ENCODE measurements at regions of chr16 and their contacts with region 1.

Region 1: DNA sequence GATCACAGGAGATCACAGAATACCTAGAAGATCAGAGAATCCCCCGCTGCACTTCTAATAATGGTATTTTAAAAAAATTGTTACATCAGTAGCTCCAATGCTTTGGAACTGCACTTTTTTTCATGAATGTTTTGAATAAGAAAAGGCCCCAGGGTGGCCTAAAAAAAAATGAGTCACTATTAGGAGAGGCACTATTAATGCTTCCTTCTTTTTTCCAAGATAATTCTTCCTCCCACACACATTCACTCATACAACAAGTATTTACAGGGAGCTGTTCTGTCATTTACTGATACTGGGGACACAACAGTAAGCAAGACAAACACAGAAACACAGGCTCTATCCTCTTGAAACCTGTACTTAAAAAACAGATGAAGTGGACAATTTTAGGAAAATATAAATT is 675 bp upstream of the PDZD9 start:
- DNase-seq: no peak
- ATAC-seq: no peak

Region 2: GRCh38 chr16:21971856-21972255 is 29.7 kb before region 1 on chr16:
- intact Hi-C with region 1: no loop called
- DNase-seq: no peak
- ATAC-seq: no peak

Region 3: DNA sequence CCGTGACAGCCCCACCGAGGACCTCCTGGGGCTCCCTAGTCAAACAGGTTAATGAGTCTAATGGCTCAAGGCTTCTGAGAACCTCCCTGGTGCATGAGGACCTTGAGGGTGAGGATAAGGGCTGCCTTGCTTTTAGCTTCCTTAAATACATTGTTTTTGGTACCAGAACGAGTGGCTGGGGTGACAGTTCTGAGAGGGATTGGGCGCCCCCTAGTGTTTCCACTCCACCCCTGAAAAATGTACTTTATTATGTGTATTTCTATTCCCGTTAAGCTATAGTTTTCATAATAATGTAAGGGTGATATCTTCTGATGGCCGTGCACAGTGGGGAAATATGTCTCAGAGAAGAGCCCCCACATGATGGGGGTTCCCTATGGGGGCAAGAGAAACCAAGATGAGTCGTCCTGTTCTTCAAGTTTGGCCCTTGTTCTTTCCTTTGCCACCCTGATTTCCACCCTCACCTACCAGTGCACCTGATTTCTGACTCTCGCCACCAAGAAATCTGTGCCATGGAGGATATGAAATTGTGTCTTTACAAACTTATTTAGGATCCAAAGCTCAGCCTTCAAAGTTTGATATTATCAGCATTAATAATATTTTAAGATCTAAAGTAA is 76.2 kb after region 1 on chr16:
- intact Hi-C with region 1: loop called (anchors 1 kb)
- DNase-seq: no peak
- ATAC-seq: peak; percentile 42

Region 4: GRCh38 chr16:22098405-22099255 is 97.0 kb after region 1 on chr16:
- intact Hi-C with region 1: loop called (anchors 5 kb)
- DNase-seq: no peak
- ATAC-seq: no peak